Heart left ventricle (tissue), 16 donors: ENCODE measurements at regions of chr1 and their contacts with region 1.

Region 1: DNA sequence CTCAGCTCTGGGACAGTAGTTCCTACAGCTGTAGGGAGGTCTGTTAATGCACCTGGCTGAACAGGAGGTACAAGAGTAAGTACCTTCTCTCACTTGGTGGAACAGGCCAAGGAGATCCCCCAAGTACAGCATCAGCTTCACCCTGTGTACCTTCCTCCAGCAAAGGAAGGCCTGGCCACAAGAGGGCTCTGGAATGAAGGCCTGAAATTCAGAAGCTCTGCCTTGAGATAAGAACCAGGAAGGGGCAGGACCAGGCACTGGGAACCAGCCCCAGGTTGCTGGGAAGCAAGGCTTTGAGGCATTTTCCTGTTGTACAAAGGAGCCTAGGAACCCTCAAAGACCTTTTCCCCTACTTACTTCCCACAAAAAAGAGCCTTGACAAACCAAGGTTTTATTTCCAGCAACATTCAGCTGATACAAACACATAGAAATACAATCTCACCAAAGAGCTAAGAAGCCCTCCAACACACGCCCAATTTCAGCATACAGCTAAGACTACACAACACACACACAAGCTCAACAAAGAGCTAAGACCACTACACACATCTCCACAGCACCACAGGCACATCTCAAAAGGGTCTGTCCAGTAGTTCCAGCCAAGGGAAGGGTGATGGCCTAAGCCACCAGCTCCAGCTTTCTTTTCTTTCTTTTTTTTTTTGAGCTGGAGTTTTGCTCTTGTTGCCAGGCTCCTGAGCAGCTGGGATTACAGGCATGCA is 23.5 kb downstream of the F11R start:
- DNase-seq: peak; percentile 66 to 79 (median 70)
- ATAC-seq: peak; percentile 83 to 94 (median 90)
- H3K4me3 ChIP-seq: no peak overlapping the region
- H3K27ac ChIP-seq: peak overlapping the region in 10 of 12 donors; percentile 10 to 76 (median 54)
- H3K4me1 ChIP-seq: peaks cover 0 to 24% (median 6%) of the 10 kb centered on the region in 12 donors
- H3K27me3 ChIP-seq: no peaks in the 10 kb centered on the region
- CTCF ChIP-seq: peak; percentile 46 to 77 (median 62)
- POLR2A ChIP-seq: no peak

Region 2: DNA sequence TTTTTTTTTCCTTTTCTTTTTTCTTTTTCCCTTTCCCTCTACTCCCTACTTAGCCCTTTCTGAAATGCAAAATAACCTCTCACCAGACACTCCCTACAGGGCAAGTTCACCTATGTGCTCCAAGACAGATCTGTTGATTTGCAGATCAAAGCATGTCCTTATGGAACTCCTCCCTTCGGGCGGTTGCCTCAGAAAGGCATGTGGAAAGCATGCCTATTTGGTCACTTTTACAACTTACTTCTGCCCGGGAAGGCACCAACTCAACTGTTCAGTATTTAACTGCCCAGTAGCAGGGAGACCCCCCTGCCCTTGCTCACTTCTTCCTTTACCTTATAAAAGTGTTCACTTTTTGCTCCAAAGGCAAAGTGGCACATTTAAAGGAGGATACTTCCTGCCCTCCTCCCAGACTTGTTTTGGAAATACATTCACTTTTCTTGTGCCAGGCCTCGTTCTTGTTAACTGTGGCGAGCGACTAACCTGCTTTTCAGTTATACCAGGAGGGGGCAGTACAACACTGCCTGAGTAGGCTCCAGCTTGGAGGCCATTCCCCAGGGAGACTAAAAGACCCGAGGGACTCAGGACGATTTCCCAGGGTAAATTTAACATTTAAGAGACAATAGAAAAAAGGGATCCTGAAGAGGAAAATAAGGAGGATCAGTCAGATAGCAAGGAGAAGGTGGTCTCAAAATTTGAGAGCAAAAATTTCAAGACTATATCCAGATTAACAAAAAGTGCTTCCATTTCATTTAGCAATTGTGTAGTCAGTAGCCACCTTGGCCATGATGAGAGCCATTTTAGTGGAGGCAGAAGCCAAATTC is 270.8 kb before region 1 on chr1:
- intact Hi-C with region 1: loop called in 3 of 10 experiments (anchors 5 kb)
- DNase-seq: peak in 4 of 5 donors; percentile 34 to 56 (median 47)
- ATAC-seq: peak; percentile 67 to 81 (median 72)
- H3K4me3 ChIP-seq: no peak overlapping the region
- H3K27ac ChIP-seq: peak overlapping the region in 1 of 12 donors; percentile 43
- H3K4me1 ChIP-seq: peaks cover 0 to 30% (median 0%) of the 10 kb centered on the region in 12 donors
- H3K27me3 ChIP-seq: peaks cover 0 to 6% (median 0%) of the 10 kb centered on the region in 9 donors
- CTCF ChIP-seq: peak; percentile 56 to 84 (median 69)
- POLR2A ChIP-seq: no peak

Region 3: GRCh38 chr1:161021165-161021960 is 23.9 kb after region 1 on chr1:
- intact Hi-C with region 1: no loop called
- DNase-seq: peak; percentile 77 to 84 (median 78)
- ATAC-seq: peak; percentile 85 to 92 (median 90)
- H3K4me3 ChIP-seq: peak overlapping the region; percentile 58 to 79 (median 66)
- H3K27ac ChIP-seq: peak overlapping the region in 11 of 12 donors; percentile 66 to 95 (median 87)
- H3K4me1 ChIP-seq: peaks cover 0 to 49% (median 19%) of the 10 kb centered on the region in 12 donors
- H3K27me3 ChIP-seq: peaks cover 0 to 4% (median 0%) of the 10 kb centered on the region in 9 donors
- CTCF ChIP-seq: no peak
- POLR2A ChIP-seq: peak in 1 of 2 donors; percentile 9

Region 4: DNA sequence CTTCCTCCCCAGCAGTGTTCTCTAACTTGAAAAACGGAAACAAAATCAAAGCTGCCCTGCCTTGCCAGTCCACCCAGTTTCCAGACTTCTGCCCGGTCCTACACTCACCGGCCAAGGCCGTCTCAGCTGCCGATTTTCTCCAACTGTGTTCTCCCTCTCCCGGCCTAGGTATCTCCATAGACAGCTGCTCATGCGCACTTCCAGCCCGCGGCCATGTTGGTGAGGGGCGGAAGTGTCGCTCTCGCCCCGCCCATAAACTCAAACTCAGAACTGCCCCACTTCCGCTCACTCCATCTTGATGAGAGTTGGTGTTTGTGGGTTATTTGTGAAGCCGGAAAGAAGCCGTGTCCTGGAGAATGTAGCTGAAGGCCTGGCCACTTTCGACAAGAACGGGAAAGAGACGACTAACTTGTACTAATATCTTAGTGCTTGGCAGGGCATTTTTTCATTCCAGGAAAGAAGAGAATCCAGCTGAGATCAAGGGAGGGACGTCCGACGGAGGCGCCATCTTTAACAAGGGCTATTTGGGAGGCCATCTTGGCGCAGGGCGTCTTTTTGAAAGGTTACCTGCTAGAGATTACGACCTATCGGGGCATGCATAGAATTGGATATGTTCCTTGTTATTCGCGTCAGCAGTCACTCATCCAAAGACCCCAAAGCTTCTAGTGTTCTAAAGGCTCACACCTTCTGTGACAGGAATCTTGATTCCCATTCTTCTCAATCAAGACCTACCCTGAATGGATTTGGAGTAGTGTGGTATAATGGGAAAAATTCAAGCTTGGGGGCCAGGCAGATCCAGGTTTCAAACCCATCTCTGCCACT is 48.5 kb after region 1 on chr1 and contains the start of gene USF1:
- intact Hi-C with region 1: loop called in 8 of 10 experiments (anchors 1 to 10 kb)
- DNase-seq: peak; percentile 93 to 96 (median 94)
- ATAC-seq: peak; percentile 97 to 98 (median 98)
- H3K4me3 ChIP-seq: peak within 1 kb of the TSS; percentile 69 to 99 (median 82)
- H3K27ac ChIP-seq: peak within 1 kb of the TSS; percentile 87 to 98 (median 96)
- H3K4me1 ChIP-seq: peaks cover 0 to 46% (median 15%) of the 10 kb centered on the region in 12 donors
- H3K27me3 ChIP-seq: no peaks in the 10 kb centered on the region
- CTCF ChIP-seq: peak in 1 of 12 donors; percentile 8
- POLR2A ChIP-seq: peak; percentile 18 to 67
- total RNA-seq, gene USF1: 20.2 to 51.1 (median 28.2) TPM

Region 5: GRCh38 chr1:161132410-161133219 is 135.1 kb after region 1 on chr1 and contains the start of gene DEDD:
- intact Hi-C with region 1: loop called in 4 of 10 experiments (anchors 5 to 10 kb)
- DNase-seq: peak; percentile 95 to 97 (median 96)
- ATAC-seq: peak; percentile 93 to 97 (median 96)
- H3K4me3 ChIP-seq: peak within 1 kb of the TSS; percentile 42 to 92 (median 71)
- H3K27ac ChIP-seq: peak within 1 kb of the TSS; percentile 87 to 99 (median 97)
- H3K4me1 ChIP-seq: peaks cover 5 to 74% (median 41%) of the 10 kb centered on the region in 12 donors
- H3K27me3 ChIP-seq: no peaks in the 10 kb centered on the region
- CTCF ChIP-seq: peak in 3 of 12 donors; percentile 9 to 30 (median 22)
- POLR2A ChIP-seq: peak in 1 of 2 donors; percentile 48
- total RNA-seq, gene DEDD: 20.8 to 36.0 (median 26.5) TPM

Region 6: GRCh38 chr1:161153679-161154426 is 156.4 kb after region 1 on chr1 and contains the start of gene UFC1:
- intact Hi-C with region 1: loop called in 1 of 10 experiments (anchors 5 kb)
- DNase-seq: peak; percentile 80 to 87 (median 84)
- ATAC-seq: peak; percentile 90 to 95 (median 94)
- H3K4me3 ChIP-seq: peak within 1 kb of the TSS; percentile 59 to 93 (median 80)
- H3K27ac ChIP-seq: peak within 1 kb of the TSS; percentile 79 to 99 (median 94)
- H3K4me1 ChIP-seq: peaks cover 0 to 27% (median 12%) of the 10 kb centered on the region in 12 donors
- H3K27me3 ChIP-seq: no peaks in the 10 kb centered on the region
- CTCF ChIP-seq: no peak
- POLR2A ChIP-seq: peak in 1 of 2 donors; percentile 33
- total RNA-seq, gene UFC1: 54.4 to 86.9 (median 73.2) TPM